ENCODE measurements at regions of chr16 and their contacts with region 1.

Region 1: GRCh38 chr16:77308163-77308561 is 109.0 kb downstream of the SYCE1L start:
- DNase-seq: no peak
- H3K4me3 ChIP-seq: no peak overlapping the region
- H3K4me3 Mint-ChIP-seq: no peak overlapping the region
- H3K27ac Mint-ChIP-seq: no peak overlapping the region
- H3K4me1 ChIP-seq: peaks cover 41% of the 10 kb centered on the region
- H3K4me1 Mint-ChIP-seq: peaks cover 27% of the 10 kb centered on the region
- H3K27me3 ChIP-seq: no peaks in the 10 kb centered on the region
- H3K27me3 Mint-ChIP-seq: no peaks in the 10 kb centered on the region
- CTCF ChIP-seq: no peak

Region 2: GRCh38 chr16:77033516-77033915 is 274.6 kb before region 1 on chr16:
- CTCF ChIA-PET with region 1: no interaction called
- POLR2A ChIA-PET with region 1: no interaction called
- intact Hi-C with region 1: no loop called
- DNase-seq: no peak
- H3K4me3 ChIP-seq: no peak overlapping the region
- H3K4me3 Mint-ChIP-seq: no peak overlapping the region
- H3K27ac Mint-ChIP-seq: no peak overlapping the region
- H3K4me1 ChIP-seq: no peaks in the 10 kb centered on the region
- H3K4me1 Mint-ChIP-seq: no peaks in the 10 kb centered on the region
- H3K27me3 ChIP-seq: no peaks in the 10 kb centered on the region
- H3K27me3 Mint-ChIP-seq: peaks cover 11% of the 10 kb centered on the region
- CTCF ChIP-seq: no peak

Region 3: DNA sequence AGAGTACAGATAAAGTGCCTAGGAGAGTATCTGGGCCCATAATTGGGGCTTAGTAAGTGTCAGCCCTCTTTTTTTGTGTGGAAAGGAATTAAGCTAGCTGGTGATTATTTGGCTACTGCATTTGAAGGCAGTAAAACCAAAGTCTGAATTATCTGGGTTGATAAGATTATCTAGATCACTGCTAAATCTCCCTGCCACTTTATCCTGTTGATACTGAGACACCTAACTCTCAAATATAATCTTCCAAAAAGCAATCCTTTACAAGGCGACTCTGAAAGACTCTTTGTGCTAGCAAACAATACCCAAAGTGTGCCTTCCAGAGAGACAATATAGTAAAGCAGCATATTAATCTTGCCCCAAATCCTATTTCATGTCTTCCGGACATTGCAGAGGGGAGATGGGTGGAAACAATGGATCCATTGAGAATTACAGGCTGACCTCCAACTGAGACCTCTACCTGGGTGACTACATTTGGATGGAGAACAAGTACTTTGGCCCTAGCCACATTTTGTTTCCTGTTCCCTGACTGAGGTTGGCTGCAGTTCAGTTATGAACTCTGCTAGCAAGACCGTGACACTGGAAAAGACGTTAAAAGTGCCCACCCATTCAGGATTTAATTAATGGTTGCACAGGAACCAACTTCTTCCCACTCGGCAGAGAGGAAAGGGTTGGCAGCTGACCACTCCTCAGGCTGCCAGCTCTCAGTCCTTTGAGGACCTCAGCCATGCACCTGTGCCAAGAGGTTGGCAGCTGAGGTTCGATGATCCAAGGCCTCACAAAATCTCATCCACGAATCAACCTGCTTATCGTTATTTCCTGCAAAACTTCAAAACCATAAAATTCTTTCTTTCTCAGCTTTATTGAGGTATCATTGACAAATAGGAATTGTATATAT is 36.4 kb before region 1 on chr16:
- CTCF ChIA-PET with region 1: no interaction called
- POLR2A ChIA-PET with region 1: no interaction called
- intact Hi-C with region 1: loop called (anchors 2 kb)
- DNase-seq: peak in 1 of 2 experiments; percentile 18
- H3K4me3 ChIP-seq: no peak overlapping the region
- H3K4me3 Mint-ChIP-seq: no peak overlapping the region
- H3K27ac Mint-ChIP-seq: peak overlapping the region; percentile 30
- H3K4me1 ChIP-seq: peaks cover 18% of the 10 kb centered on the region
- H3K4me1 Mint-ChIP-seq: peaks cover 18% of the 10 kb centered on the region
- H3K27me3 ChIP-seq: no peaks in the 10 kb centered on the region
- H3K27me3 Mint-ChIP-seq: no peaks in the 10 kb centered on the region
- CTCF ChIP-seq: no peak

Region 4: GRCh38 chr16:77353587-77354263 is 45.6 kb after region 1 on chr16:
- CTCF ChIA-PET with region 1: no interaction called
- POLR2A ChIA-PET with region 1: no interaction called
- intact Hi-C with region 1: loop called (anchors 1 kb)
- DNase-seq: peak; percentile 54 to 61
- H3K4me3 ChIP-seq: no peak overlapping the region
- H3K4me3 Mint-ChIP-seq: no peak overlapping the region
- H3K27ac Mint-ChIP-seq: no peak overlapping the region
- H3K4me1 ChIP-seq: peaks cover 42% of the 10 kb centered on the region
- H3K4me1 Mint-ChIP-seq: peaks cover 29% of the 10 kb centered on the region
- H3K27me3 ChIP-seq: no peaks in the 10 kb centered on the region
- H3K27me3 Mint-ChIP-seq: no peaks in the 10 kb centered on the region
- CTCF ChIP-seq: no peak

Region 5: DNA sequence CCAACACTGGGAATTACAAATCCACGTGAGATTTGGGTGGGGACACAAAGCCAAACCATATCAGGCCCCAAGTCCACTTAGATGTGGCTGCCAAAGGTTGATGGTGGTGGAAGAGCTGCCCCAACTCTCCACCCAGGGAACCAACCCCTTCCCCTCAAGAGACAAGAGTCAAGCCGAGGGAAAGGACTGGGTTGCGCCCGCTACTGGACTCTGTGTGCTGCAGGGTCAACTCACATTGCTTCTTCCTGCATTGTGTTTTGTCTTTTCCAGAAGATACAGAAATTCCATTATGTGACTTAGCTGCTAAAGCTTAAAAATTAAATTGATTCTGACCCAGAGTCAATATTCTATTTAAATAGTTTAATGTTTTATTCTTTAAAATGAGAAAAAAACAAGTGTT is 68.2 kb after region 1 on chr16:
- CTCF ChIA-PET with region 1: interaction called, 3 read pairs
- POLR2A ChIA-PET with region 1: no interaction called
- intact Hi-C with region 1: loop called (anchors 1 kb)
- DNase-seq: no peak
- H3K4me3 ChIP-seq: no peak overlapping the region
- H3K4me3 Mint-ChIP-seq: no peak overlapping the region
- H3K27ac Mint-ChIP-seq: no peak overlapping the region
- H3K4me1 ChIP-seq: peaks cover 31% of the 10 kb centered on the region
- H3K4me1 Mint-ChIP-seq: peaks cover 29% of the 10 kb centered on the region
- H3K27me3 ChIP-seq: no peaks in the 10 kb centered on the region
- H3K27me3 Mint-ChIP-seq: no peaks in the 10 kb centered on the region
- CTCF ChIP-seq: peak in 1 of 2 experiments; percentile 18

Region 6: GRCh38 chr16:77584205-77584859 is 276.2 kb after region 1 on chr16:
- CTCF ChIA-PET with region 1: interaction called, 4 read pairs
- POLR2A ChIA-PET with region 1: no interaction called
- intact Hi-C with region 1: loop called (anchors 5 kb)
- DNase-seq: peak; percentile 46 to 52
- H3K4me3 ChIP-seq: no peak overlapping the region
- H3K4me3 Mint-ChIP-seq: no peak overlapping the region
- H3K27ac Mint-ChIP-seq: no peak overlapping the region
- H3K4me1 ChIP-seq: no peaks in the 10 kb centered on the region
- H3K4me1 Mint-ChIP-seq: no peaks in the 10 kb centered on the region
- H3K27me3 ChIP-seq: no peaks in the 10 kb centered on the region
- H3K27me3 Mint-ChIP-seq: peaks cover 2% of the 10 kb centered on the region
- CTCF ChIP-seq: peak; percentile 87 to 91